AG04449 (cell line): ENCODE measurements at regions of chr6 and their contacts with region 1.

Region 1: GRCh38 chr6:138001750-138002349 is 105.4 kb downstream of the PERP start:
- DNase-seq: no peak
- H3K4me3 ChIP-seq: no peak overlapping the region
- CTCF ChIP-seq: peak; percentile 73

Region 2: DNA sequence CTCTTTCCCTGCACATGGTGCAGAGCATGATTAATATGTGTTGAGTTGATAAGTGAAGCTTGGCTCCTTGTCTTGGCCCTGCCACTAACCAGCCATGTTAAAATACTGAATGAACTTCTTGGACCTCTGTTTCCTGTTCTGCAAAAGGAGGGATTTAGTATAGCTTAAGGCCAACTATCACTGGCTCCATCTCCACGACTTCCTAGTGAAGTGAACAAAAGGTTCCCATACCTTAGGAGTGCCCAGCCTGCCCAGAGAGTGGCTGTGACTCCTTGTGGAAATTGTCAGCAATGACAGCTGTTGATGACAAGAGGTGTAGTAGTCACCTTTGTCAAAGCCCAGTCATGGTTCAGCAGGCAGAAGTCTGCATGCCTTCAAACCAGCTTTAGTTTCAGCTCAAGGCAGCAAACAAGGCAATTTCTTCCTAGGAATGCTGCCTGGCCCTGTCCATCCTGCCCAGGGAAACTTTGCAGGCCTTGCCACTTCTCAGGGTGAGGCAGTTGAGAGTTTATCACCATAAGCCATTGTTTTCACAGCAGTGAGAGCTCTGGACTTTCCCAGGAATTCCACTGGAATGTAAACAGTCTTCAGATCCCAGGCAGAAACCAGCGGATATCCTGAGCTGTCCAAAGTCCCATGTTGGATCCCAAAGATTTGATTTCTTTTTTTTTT is 304.4 kb before region 1 on chr6:
- CTCF ChIA-PET with region 1: interaction called, 16 read pairs
- POLR2A ChIA-PET with region 1: no interaction called
- DNase-seq: peak; percentile 12
- H3K4me3 ChIP-seq: no peak overlapping the region
- CTCF ChIP-seq: no peak

Region 3: DNA sequence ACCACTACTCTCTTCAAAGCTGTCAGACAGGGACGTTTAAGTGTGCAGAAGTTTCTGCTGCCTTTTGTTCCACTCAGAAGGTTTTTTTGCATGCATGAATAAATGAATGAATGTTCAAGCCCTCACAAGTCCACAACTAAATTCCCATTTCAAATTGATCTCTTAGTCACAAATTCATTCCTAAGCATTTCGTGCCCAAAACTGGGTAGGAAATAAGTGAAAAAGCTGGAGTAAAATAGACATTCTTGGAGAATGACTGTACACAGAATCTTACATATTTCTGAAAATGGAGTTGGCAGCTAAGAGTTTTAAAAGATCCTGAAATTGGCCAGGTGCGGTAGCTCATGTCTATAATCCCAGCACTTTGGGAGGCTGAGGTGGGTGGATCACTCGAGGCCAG is 12.2 kb before region 1 on chr6:
- CTCF ChIA-PET with region 1: interaction called, 17 read pairs
- POLR2A ChIA-PET with region 1: no interaction called
- DNase-seq: no peak
- H3K4me3 ChIP-seq: no peak overlapping the region
- CTCF ChIP-seq: no peak

Region 4: GRCh38 chr6:138017166-138017757 is 15.4 kb after region 1 on chr6:
- CTCF ChIA-PET with region 1: interaction called, 38 read pairs
- POLR2A ChIA-PET with region 1: no interaction called
- DNase-seq: no peak
- H3K4me3 ChIP-seq: no peak overlapping the region
- CTCF ChIP-seq: no peak

Region 5: GRCh38 chr6:138109042-138109997 is 107.5 kb after region 1 on chr6:
- CTCF ChIA-PET with region 1: interaction called, 203 read pairs
- POLR2A ChIA-PET with region 1: no interaction called
- DNase-seq: no peak
- H3K4me3 ChIP-seq: no peak overlapping the region
- CTCF ChIP-seq: peak; percentile 78